H1 (cell line): ENCODE measurements at regions of chr12 and their contacts with region 1.

Region 1: GRCh38 chr12:24778486-24779304 is 170.2 kb downstream of the BCAT1 start:
- DNase-seq: no peak
- H3K4me3 ChIP-seq: no peak overlapping the region
- H3K27ac ChIP-seq: no peak overlapping the region
- H3K4me1 ChIP-seq: no peaks in the 10 kb centered on the region
- H3K27me3 ChIP-seq: no peaks in the 10 kb centered on the region
- CTCF ChIP-seq: peak in 2 of 3 experiments; percentile 38 to 44; a peak in 2 of 4 replicates
- EP300 ChIP-seq: no peak
- POLR2A ChIP-seq: no peak
- RAD21 ChIP-seq: peak; percentile 78 to 79

Region 2: DNA sequence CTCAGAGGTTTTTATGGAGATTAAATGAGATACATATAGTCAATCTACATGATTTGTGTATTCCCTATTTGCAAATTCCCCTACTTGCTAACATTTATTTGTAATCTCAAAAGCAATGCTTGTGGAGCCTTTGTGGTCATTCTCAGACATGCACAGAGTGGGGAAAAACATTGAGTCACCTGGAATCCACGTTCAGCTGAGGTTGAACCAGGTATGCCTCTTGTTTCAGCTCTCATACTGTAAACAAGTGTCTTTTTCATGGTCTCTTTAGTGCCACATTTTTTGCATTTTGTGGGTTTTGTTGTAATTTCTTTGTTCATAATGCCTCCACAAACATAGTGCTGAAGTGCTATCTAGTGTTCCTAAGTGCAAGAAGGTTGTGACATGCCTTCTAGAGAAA is 11.7 kb before region 1 on chr12:
- CTCF ChIA-PET with region 1: interaction called, 25 read pairs
- POLR2A ChIA-PET with region 1: no interaction called
- DNase-seq: no peak
- H3K4me3 ChIP-seq: no peak overlapping the region
- H3K27ac ChIP-seq: no peak overlapping the region
- H3K4me1 ChIP-seq: no peaks in the 10 kb centered on the region
- H3K27me3 ChIP-seq: no peaks in the 10 kb centered on the region
- CTCF ChIP-seq: no peak
- EP300 ChIP-seq: no peak
- POLR2A ChIP-seq: no peak
- RAD21 ChIP-seq: no peak

Region 3: DNA sequence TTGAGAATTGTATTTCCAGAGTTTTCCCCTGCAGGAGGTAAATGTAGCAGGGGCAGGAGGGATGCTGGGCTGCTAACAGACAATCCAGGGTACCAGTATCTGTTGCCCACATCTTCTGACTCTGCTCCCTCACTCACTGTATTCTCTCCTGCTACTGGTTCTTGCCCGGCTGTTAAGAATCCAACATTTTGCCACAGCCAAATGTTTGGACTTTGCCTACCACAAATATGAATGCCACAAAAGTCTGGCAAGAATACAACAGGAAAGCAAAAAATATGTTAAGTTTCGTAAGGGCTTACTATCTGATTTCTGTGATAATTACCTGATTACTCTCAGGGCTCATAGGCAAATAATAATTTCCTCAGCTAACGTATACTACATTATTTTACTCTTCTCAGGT is 10.2 kb after region 1 on chr12:
- CTCF ChIA-PET with region 1: interaction called, 10 read pairs
- POLR2A ChIA-PET with region 1: no interaction called
- DNase-seq: no peak
- H3K4me3 ChIP-seq: no peak overlapping the region
- H3K27ac ChIP-seq: no peak overlapping the region
- H3K4me1 ChIP-seq: no peaks in the 10 kb centered on the region
- H3K27me3 ChIP-seq: no peaks in the 10 kb centered on the region
- CTCF ChIP-seq: no peak
- EP300 ChIP-seq: no peak
- POLR2A ChIP-seq: no peak
- RAD21 ChIP-seq: no peak

Region 4: DNA sequence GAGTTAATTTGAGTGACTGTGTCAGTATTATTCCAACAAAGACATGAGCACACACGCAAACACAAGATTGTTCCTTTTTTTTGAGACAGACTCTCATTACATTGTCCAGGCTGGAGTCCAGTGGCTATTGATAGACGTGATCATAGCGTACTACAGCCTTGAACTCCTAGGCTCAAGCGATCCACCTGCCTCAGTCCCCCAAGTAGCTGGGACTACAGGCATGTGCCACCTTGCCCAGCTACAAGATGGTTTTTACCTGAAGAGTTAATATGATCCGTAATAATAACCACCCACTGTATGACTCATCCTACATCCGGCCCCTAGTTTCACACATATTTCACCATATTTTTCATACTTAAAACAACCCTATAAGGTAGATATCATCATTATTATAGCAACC is 143.4 kb after region 1 on chr12:
- CTCF ChIA-PET with region 1: no interaction called
- POLR2A ChIA-PET with region 1: no interaction called
- DNase-seq: no peak
- H3K4me3 ChIP-seq: no peak overlapping the region
- H3K27ac ChIP-seq: no peak overlapping the region
- H3K4me1 ChIP-seq: peaks cover 0 to 4% (median 3%) of the 10 kb centered on the region in 4 experiments; a peak in 5 of 7 replicates
- H3K27me3 ChIP-seq: no peaks in the 10 kb centered on the region
- CTCF ChIP-seq: no peak
- EP300 ChIP-seq: no peak
- POLR2A ChIP-seq: no peak
- RAD21 ChIP-seq: no peak